Cardiac septum (tissue), 1 donor: ENCODE measurements at regions of chrX and their contacts with region 1.

Region 1: GRCh38 chrX:42567268-42567667 is 210.7 kb downstream of the PPP1R2C start:
- DNase-seq: no peak

Region 2: DNA sequence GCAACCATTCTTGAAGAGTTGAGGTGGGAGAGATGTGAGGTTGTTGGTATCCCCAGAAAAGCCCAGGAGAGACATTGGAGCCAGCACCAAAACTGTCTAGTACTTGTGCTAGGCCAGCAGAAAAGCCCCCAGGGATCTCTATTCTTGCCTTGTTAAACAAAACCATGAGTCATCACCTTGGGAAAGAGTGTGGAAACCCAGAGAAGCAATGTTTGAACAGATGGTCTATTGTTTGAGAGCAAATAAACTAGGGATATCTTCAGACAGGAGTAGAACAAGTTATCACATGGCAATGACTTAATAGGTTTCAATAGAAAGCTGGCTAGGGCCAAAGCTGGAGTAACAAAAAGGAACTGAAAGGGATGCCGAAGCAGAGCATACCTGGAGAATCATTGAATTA is 448.2 kb before region 1 on chrX:
- intact Hi-C with region 1: no loop called
- DNase-seq: no peak

Region 3: DNA sequence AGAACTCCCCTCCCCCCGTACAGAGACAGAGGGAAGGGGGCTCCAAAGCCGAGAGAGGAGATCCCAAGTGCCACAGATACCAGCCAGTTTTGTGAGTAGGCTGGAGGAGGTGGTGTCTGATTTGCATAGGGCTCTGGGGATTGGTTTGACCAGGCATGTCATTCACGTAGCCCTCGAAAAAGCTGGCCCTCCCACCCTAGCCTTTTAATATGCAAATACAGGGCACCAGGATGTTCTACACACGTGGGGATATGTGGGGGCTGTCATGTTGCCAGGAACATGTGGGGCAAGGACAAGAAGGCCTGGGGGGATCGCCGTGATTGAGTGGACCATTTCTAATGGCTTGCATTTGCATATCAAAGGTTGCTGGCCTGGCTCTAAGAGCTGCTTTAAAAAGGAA is 62.3 kb before region 1 on chrX:
- intact Hi-C with region 1: loop called (anchors 10 kb)
- DNase-seq: no peak